ENCODE measurements at regions of chr5 and their contacts with region 1.

Region 1: GRCh38 chr5:54517174-54518092 is at the start of gene SNX18:
- DNase-seq: peak; percentile 89 to 96
- ATAC-seq: peak; percentile 85 to 97 (median 89)
- H3K4me3 ChIP-seq: peak within 1 kb of the TSS; percentile 52
- H3K4me3 Mint-ChIP-seq: peak within 1 kb of the TSS; percentile 97
- H3K27ac ChIP-seq: peak within 1 kb of the TSS; percentile 46
- H3K27ac Mint-ChIP-seq: peak within 1 kb of the TSS; percentile 37 to 90
- H3K4me1 ChIP-seq: peaks cover 29% of the 10 kb centered on the region
- H3K4me1 Mint-ChIP-seq: peaks cover 8 to 34% of the 10 kb centered on the region in 2 donors
- H3K27me3 ChIP-seq: no peaks in the 10 kb centered on the region
- H3K27me3 Mint-ChIP-seq: peaks cover 0 to 6% of the 10 kb centered on the region in 2 donors
- CTCF ChIP-seq: peak; percentile 94
- total RNA-seq, gene SNX18: 31.1 to 45.6 (median 40.8) TPM

Region 2: GRCh38 chr5:54310433-54311175 is 206.8 kb before region 1 on chr5 and contains the start of gene ARL15:
- intact Hi-C with region 1: loop called (anchors 2 kb)
- DNase-seq: peak; percentile 96 to 98
- ATAC-seq: peak; percentile 93 to 98 (median 94)
- H3K4me3 ChIP-seq: peak within 1 kb of the TSS; percentile 79
- H3K4me3 Mint-ChIP-seq: peak within 1 kb of the TSS; percentile 98
- H3K27ac ChIP-seq: peak within 1 kb of the TSS; percentile 67
- H3K27ac Mint-ChIP-seq: peak within 1 kb of the TSS; percentile 90 to 98
- H3K4me1 ChIP-seq: peaks cover 14% of the 10 kb centered on the region
- H3K4me1 Mint-ChIP-seq: peaks cover 44 to 46% of the 10 kb centered on the region in 2 donors
- H3K27me3 ChIP-seq: no peaks in the 10 kb centered on the region
- H3K27me3 Mint-ChIP-seq: peaks cover 0 to 7% of the 10 kb centered on the region in 2 donors
- CTCF ChIP-seq: no peak
- total RNA-seq, gene ARL15: 28.9 to 35.1 (median 33.1) TPM

Region 3: GRCh38 chr5:54480296-54480695 is 37.1 kb before region 1 on chr5:
- intact Hi-C with region 1: no loop called
- DNase-seq: no peak
- ATAC-seq: no peak
- H3K4me3 ChIP-seq: no peak overlapping the region
- H3K4me3 Mint-ChIP-seq: no peak overlapping the region
- H3K27ac ChIP-seq: no peak overlapping the region
- H3K27ac Mint-ChIP-seq: no peak overlapping the region
- H3K4me1 ChIP-seq: no peaks in the 10 kb centered on the region
- H3K4me1 Mint-ChIP-seq: peaks cover 0 to 5% of the 10 kb centered on the region in 2 donors
- H3K27me3 ChIP-seq: peaks cover 2% of the 10 kb centered on the region
- H3K27me3 Mint-ChIP-seq: peaks cover 11 to 16% of the 10 kb centered on the region in 2 donors
- CTCF ChIP-seq: no peak

Region 4: GRCh38 chr5:54743997-54744788 is 226.8 kb after region 1 on chr5:
- intact Hi-C with region 1: loop called (anchors 2 kb)
- DNase-seq: peak; percentile 41 to 76
- ATAC-seq: peak; percentile 92 to 97 (median 96)
- H3K4me3 ChIP-seq: no peak overlapping the region
- H3K4me3 Mint-ChIP-seq: peak overlapping the region; percentile 47
- H3K27ac ChIP-seq: peak overlapping the region; percentile 48
- H3K27ac Mint-ChIP-seq: peak overlapping the region; percentile 73 to 84
- H3K4me1 ChIP-seq: peaks cover 25% of the 10 kb centered on the region
- H3K4me1 Mint-ChIP-seq: peaks cover 32 to 52% of the 10 kb centered on the region in 2 donors
- H3K27me3 ChIP-seq: no peaks in the 10 kb centered on the region
- H3K27me3 Mint-ChIP-seq: peaks cover 0 to 4% of the 10 kb centered on the region in 2 donors
- CTCF ChIP-seq: no peak

Region 5: GRCh38 chr5:54844905-54845566 is 327.6 kb after region 1 on chr5:
- intact Hi-C with region 1: loop called (anchors 1 kb)
- DNase-seq: peak in 1 of 2 donors; percentile 74
- ATAC-seq: peak in 1 of 3 donors; percentile 67
- H3K4me3 ChIP-seq: no peak overlapping the region
- H3K4me3 Mint-ChIP-seq: peak overlapping the region; percentile 86
- H3K27ac ChIP-seq: no peak overlapping the region
- H3K27ac Mint-ChIP-seq: peak overlapping the region; percentile 63 to 77
- H3K4me1 ChIP-seq: no peaks in the 10 kb centered on the region
- H3K4me1 Mint-ChIP-seq: peaks cover 11 to 24% of the 10 kb centered on the region in 2 donors
- H3K27me3 ChIP-seq: no peaks in the 10 kb centered on the region
- H3K27me3 Mint-ChIP-seq: peaks cover 0 to 6% of the 10 kb centered on the region in 2 donors
- CTCF ChIP-seq: peak; percentile 78

Region 6: GRCh38 chr5:54867310-54867944 is 350.0 kb after region 1 on chr5:
- intact Hi-C with region 1: loop called (anchors 1 kb)
- DNase-seq: peak in 1 of 2 donors; percentile 75
- ATAC-seq: peak; percentile 67 to 78 (median 75)
- H3K4me3 ChIP-seq: no peak overlapping the region
- H3K4me3 Mint-ChIP-seq: peak overlapping the region; percentile 32
- H3K27ac ChIP-seq: no peak overlapping the region
- H3K27ac Mint-ChIP-seq: no peak overlapping the region
- H3K4me1 ChIP-seq: no peaks in the 10 kb centered on the region
- H3K4me1 Mint-ChIP-seq: peaks cover 4 to 8% of the 10 kb centered on the region in 2 donors
- H3K27me3 ChIP-seq: no peaks in the 10 kb centered on the region
- H3K27me3 Mint-ChIP-seq: peaks cover 2 to 40% of the 10 kb centered on the region in 2 donors
- CTCF ChIP-seq: peak; percentile 80

Region 7: DNA sequence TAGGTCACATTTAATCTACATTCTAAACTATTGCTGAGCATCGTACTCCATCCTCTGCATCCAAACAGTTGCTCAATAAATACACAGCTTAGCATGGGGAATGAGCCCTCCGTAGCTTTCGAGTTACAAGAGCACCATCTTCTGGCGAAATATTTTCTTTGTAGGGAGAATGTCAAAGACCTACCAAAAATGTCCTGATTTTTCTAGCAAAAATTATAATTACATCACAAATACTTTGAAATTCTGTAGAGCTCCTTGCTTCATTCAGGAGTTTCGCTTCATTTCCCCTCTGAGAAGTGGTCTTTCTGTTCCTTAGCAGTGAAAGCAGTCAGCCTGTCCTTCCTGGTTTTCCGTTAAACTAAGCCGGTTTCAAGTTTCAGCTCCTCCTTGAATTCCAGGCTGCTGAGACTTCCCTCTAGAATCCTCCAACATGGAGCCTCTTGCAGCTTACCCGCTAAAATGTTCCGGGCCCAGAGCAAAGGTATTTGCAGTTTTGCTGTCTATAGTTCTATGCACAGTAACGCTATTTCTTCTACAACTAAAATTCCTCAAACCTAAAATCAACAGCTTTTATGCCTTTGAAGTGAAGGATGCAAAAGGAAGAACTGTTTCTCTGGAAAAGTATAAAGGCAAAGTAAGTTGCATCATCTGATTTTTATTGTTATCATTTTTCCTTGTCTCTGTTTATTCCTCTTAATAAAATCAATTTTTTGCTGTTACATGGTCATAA is 642.5 kb after region 1 on chr5 and contains the start of gene GPX8:
- intact Hi-C with region 1: loop called (anchors 1 kb)
- DNase-seq: peak in 1 of 2 donors; percentile 77
- ATAC-seq: peak; percentile 64 to 80 (median 78)
- H3K4me3 ChIP-seq: no peak within 1 kb of the TSS
- H3K4me3 Mint-ChIP-seq: no peak within 1 kb of the TSS
- H3K27ac ChIP-seq: no peak within 1 kb of the TSS
- H3K27ac Mint-ChIP-seq: no peak within 1 kb of the TSS
- H3K4me1 ChIP-seq: no peaks in the 10 kb centered on the region
- H3K4me1 Mint-ChIP-seq: peaks cover 0 to 6% of the 10 kb centered on the region in 2 donors
- H3K27me3 ChIP-seq: peaks cover 20% of the 10 kb centered on the region
- H3K27me3 Mint-ChIP-seq: peaks cover 33 to 39% of the 10 kb centered on the region in 2 donors
- CTCF ChIP-seq: peak; percentile 59
- total RNA-seq, gene GPX8: not detected

Region 8: GRCh38 chr5:55307383-55308253 is 790.2 kb after region 1 on chr5 and contains the starts of genes DHX29 and MTREX:
- intact Hi-C with region 1: loop called (anchors 5 kb)
- DNase-seq: peak; percentile 90 to 93
- ATAC-seq: peak; percentile 91 to 95 (median 93)
- H3K4me3 ChIP-seq: peak within 1 kb of the TSS; percentile 64
- H3K4me3 Mint-ChIP-seq: no peak within 1 kb of the TSS
- H3K27ac ChIP-seq: peak within 1 kb of the TSS; percentile 93
- H3K27ac Mint-ChIP-seq: no peak within 1 kb of the TSS
- H3K4me1 ChIP-seq: peaks cover 17% of the 10 kb centered on the region
- H3K4me1 Mint-ChIP-seq: peaks cover 23 to 24% of the 10 kb centered on the region in 2 donors
- H3K27me3 ChIP-seq: no peaks in the 10 kb centered on the region
- H3K27me3 Mint-ChIP-seq: no peaks in the 10 kb centered on the region
- CTCF ChIP-seq: no peak
- total RNA-seq, gene DHX29: 16.7 to 22.0 (median 19.3) TPM
- total RNA-seq, gene MTREX: 64.5 to 82.2 (median 77.6) TPM

Measured in natural killer cell (primary cell).